ENCODE measurements at regions of chr9 and their contacts with region 1.

Region 1: GRCh38 chr9:124834591-124834990 is 18.7 kb upstream of the WDR38 start:
- DNase-seq: peak; percentile 51
- ATAC-seq: peak in 1 of 2 donors; percentile 42

Region 2: GRCh38 chr9:124779362-124780059 is 55.1 kb before region 1 on chr9:
- intact Hi-C with region 1: loop called in 1 of 2 experiments (anchors 5 kb)
- DNase-seq: no peak
- ATAC-seq: peak; percentile 25 to 61

Region 3: DNA sequence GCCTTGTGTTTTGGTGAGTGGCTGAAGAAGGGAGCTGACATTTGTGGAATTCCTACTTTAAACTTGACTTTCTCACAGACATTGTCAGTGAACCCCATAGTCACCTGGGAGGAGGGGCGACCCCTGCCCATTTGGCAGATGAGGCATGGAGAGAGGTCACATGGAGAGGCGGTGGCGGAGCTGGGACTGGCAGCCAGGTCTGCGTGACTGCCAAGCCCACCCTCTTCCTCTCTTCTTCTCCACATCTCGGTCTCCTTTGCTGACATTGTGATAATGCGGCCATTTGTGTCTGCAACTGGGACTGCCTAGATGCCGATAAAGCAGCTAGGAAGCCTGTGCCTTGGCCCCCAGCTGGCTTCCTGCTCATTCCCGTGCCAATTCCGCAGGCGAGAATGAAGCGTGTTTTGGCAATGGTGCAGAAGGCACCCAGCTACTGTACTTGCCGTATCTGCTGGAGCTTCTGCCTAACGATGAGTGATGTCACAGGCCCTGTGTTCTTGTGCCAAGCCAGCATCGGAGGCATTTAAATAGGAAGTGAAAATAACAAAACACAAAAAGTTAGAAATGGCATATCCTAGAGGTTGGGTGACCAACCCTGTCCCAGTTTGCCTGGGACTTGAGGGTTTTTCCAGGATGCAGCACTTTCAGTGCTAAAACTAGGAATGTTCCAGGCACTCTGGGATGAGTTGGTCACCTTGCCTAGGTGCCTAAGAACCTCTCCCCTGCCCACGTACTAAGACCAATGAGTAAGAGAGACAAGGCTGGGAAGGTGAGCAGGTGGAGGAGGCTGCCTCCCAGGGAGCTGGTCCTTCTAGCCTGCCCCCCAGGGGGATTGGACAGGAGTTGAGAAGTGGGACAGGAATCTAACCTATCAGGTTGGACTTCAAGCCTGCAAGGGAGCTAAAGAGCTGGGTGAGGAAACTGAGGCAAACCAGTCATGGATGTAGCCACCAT is 34.0 kb before region 1 on chr9:
- intact Hi-C with region 1: no loop called
- DNase-seq: peak; percentile 50
- ATAC-seq: peak; percentile 70 to 71